ENCODE measurements at regions of chr7 and their contacts with region 1.

Region 1: DNA sequence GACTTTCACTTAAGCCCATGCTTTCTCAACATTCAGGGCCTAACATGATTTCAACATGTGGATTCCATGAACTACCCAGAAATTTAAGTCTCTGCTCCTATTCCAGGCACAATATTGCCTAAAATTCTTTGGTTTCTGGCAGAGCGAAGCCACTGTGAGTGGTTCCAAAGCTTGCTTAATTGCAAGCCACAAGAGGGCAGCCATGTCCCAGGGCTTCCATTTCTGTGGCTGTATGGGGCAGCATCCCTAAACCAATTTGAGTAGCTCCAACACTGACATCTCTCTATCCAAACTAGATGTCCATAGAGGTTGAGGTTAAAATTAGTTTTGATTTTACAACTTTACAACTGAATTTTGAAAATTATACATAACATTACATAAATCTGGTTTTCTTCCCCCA is 56.3 kb upstream of the MDFIC start:
- DNase-seq: peak; percentile 71
- H3K4me3 ChIP-seq: no peak overlapping the region
- H3K27ac ChIP-seq: no peak overlapping the region
- H3K4me1 ChIP-seq: no peaks in the 10 kb centered on the region
- H3K27me3 ChIP-seq: no peaks in the 10 kb centered on the region
- CTCF ChIP-seq: peak; percentile 73

Region 2: GRCh38 chr7:115015619-115016018 is 150.1 kb after region 1 on chr7:
- CTCF ChIA-PET with region 1: no interaction called
- POLR2A ChIA-PET with region 1: no interaction called
- intact Hi-C with region 1: no loop called
- DNase-seq: no peak
- H3K4me3 ChIP-seq: no peak overlapping the region
- H3K27ac ChIP-seq: no peak overlapping the region
- H3K4me1 ChIP-seq: no peaks in the 10 kb centered on the region
- H3K27me3 ChIP-seq: no peaks in the 10 kb centered on the region
- CTCF ChIP-seq: no peak

Region 3: DNA sequence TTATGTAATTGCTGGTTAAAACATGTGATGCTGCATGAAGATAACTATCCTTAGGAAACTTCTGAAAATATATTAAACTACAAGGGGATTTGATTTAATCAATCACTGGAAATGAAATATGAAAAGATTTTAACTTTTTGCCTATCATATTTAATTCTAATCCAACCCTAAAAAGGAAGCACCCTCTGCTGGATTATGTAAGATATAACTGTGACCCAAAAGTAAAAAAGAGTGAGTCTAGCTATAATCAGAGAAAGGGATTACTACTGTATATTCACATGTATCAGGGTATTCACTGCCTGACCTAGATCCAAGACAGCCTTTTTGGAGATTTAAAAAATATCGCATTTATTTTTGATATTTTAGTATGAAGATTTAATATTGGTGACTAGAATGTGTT is 351.8 kb after region 1 on chr7:
- CTCF ChIA-PET with region 1: interaction called, 4 read pairs
- POLR2A ChIA-PET with region 1: no interaction called
- intact Hi-C with region 1: loop called (anchors 10 kb)
- DNase-seq: peak; percentile 31
- H3K4me3 ChIP-seq: no peak overlapping the region
- H3K27ac ChIP-seq: no peak overlapping the region
- H3K4me1 ChIP-seq: peaks cover 12% of the 10 kb centered on the region
- H3K27me3 ChIP-seq: no peaks in the 10 kb centered on the region
- CTCF ChIP-seq: peak; percentile 49; the same call in 1 of the 2 replicates

Region 4: DNA sequence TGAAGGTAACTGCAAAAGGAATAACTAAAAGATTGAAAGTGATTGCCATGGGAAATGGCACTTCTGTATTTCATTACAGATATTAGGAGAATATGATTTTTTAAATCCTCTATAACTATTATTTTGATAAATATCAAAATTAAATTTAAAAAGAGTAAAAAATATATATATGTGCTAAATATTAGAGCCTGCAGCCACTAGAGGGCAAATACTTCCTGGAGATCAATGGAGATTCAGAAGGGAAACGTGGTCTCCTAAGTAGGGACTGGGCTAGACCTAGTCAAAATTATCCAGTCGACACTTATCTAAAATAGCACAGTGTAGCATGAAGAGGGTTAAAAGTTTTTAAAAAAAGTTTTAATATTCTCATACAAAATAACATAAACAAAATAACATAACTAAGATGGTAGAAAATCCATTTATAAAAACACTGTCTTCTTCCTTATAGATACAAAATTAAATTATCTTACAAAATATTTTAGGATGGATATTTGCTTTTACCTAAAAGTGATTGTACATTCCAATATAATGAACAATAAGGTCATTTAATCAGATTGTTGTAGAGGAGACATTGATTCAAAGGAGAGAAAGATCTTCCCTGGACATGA is 490.7 kb after region 1 on chr7:
- CTCF ChIA-PET with region 1: no interaction called
- POLR2A ChIA-PET with region 1: no interaction called
- intact Hi-C with region 1: loop called (anchors 10 kb)
- DNase-seq: peak; percentile 54
- H3K4me3 ChIP-seq: no peak overlapping the region
- H3K27ac ChIP-seq: no peak overlapping the region
- H3K4me1 ChIP-seq: no peaks in the 10 kb centered on the region
- H3K27me3 ChIP-seq: no peaks in the 10 kb centered on the region
- CTCF ChIP-seq: peak; percentile 64

Region 5: DNA sequence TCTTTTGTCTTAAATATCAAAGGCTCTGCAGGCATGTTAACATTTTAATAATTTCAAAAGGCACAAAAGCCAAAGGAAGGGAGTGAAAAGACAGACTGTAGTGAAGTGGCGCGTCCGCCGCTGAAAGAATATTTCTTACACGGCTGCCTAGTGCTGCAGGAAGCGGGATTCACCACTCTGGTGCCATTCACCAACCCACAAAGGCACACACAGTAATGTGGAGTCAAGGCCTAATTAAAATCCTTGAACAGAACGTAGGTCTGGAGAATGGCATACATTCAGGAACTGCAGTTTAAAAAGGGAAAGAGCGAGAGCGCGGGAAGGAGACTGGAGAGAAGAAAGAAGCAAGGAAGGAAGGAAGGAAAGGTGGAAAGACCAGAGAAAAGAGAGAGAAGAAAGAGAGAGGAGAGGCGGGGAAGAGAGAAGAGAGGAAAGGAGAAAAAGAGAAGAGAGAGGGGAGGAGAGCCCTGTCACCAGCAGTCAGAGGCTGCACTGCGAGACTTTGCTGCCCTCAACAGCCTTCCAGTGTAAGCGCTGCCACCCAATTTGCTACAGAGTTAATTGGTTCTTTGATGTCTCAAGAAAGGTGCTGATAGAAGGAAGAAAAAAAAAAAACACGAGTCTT is 610.3 kb after region 1 on chr7:
- CTCF ChIA-PET with region 1: no interaction called
- POLR2A ChIA-PET with region 1: no interaction called
- intact Hi-C with region 1: loop called (anchors 5 kb)
- DNase-seq: peak; percentile 42
- H3K4me3 ChIP-seq: no peak overlapping the region
- H3K27ac ChIP-seq: no peak overlapping the region
- H3K4me1 ChIP-seq: no peaks in the 10 kb centered on the region
- H3K27me3 ChIP-seq: no peaks in the 10 kb centered on the region
- CTCF ChIP-seq: peak; percentile 43

Region 6: DNA sequence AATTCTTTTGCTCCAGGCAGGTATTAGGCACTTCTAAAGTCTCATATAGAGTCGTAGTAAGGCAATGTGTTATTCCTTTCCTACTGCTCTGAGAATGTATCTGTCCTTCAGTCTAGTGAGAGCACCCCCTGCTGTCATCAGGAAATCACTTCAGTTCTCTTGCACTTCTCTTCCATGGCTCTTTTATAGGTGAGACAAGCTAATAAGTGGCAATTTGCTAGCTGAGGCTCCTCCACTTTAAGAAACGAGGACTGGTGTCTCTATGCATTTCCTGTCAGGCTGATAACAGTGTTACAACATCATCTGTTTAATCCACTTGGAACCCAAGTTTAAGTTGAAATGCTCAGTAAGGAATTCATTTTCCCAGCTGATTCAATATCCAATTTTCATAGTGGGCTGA is 814.4 kb after region 1 on chr7:
- CTCF ChIA-PET with region 1: no interaction called
- POLR2A ChIA-PET with region 1: interaction called, 3 read pairs
- intact Hi-C with region 1: loop called (anchors 5 kb)
- DNase-seq: peak; percentile 92
- H3K4me3 ChIP-seq: no peak overlapping the region
- H3K27ac ChIP-seq: no peak overlapping the region
- H3K4me1 ChIP-seq: peaks cover 34% of the 10 kb centered on the region
- H3K27me3 ChIP-seq: no peaks in the 10 kb centered on the region
- CTCF ChIP-seq: peak; percentile 72

Measured in A673 (cell line).